ENCODE measurements at regions of chr2 and their contacts with region 1.

Region 1: GRCh38 chr2:144414324-144414845 is 105.5 kb downstream of the ZEB2 start:
- DNase-seq: peak; percentile 10
- H3K4me3 Mint-ChIP-seq: no peak overlapping the region
- H3K27ac Mint-ChIP-seq: no peak overlapping the region
- H3K4me1 Mint-ChIP-seq: peaks cover 17% of the 10 kb centered on the region
- H3K27me3 Mint-ChIP-seq: peaks cover 5% of the 10 kb centered on the region

Region 2: DNA sequence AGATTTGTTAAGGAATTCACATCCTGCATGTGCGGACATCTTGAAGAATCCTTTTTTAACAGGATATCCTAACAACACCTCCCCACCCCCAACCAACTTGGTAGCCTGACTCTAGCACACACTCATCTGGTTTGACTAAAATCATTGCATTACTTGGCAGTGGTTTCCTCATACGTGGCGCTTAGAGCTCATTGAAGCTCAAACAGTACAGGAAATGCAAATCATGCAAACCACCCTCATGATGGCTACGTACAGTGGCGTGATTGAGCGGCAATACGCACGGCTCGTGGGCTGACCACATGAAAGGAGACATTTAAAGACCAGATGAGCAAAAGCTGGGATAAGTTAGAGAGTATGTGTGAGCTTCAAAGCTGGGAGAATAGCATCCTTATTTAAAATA is 230.7 kb before region 1 on chr2:
- CTCF ChIA-PET with region 1: no interaction called
- intact Hi-C with region 1: loop called (anchors 1 kb)
- DNase-seq: peak; percentile 89
- H3K4me3 Mint-ChIP-seq: peak overlapping the region; percentile 52
- H3K27ac Mint-ChIP-seq: peak overlapping the region; percentile 81
- H3K4me1 Mint-ChIP-seq: peaks cover 42% of the 10 kb centered on the region
- H3K27me3 Mint-ChIP-seq: no peaks in the 10 kb centered on the region

Region 3: GRCh38 chr2:144332356-144333142 is 81.8 kb before region 1 on chr2:
- CTCF ChIA-PET with region 1: no interaction called
- intact Hi-C with region 1: loop called (anchors 1 kb)
- DNase-seq: peak; percentile 83
- H3K4me3 Mint-ChIP-seq: peak overlapping the region; percentile 79
- H3K27ac Mint-ChIP-seq: peak overlapping the region; percentile 78
- H3K4me1 Mint-ChIP-seq: peaks cover 19% of the 10 kb centered on the region
- H3K27me3 Mint-ChIP-seq: no peaks in the 10 kb centered on the region

Region 4: GRCh38 chr2:144382849-144383248 is 31.5 kb before region 1 on chr2:
- CTCF ChIA-PET with region 1: no interaction called
- intact Hi-C with region 1: loop called (anchors 2 kb)
- DNase-seq: peak; percentile 29
- H3K4me3 Mint-ChIP-seq: no peak overlapping the region
- H3K27ac Mint-ChIP-seq: no peak overlapping the region
- H3K4me1 Mint-ChIP-seq: peaks cover 26% of the 10 kb centered on the region
- H3K27me3 Mint-ChIP-seq: peaks cover 9% of the 10 kb centered on the region

Region 5: DNA sequence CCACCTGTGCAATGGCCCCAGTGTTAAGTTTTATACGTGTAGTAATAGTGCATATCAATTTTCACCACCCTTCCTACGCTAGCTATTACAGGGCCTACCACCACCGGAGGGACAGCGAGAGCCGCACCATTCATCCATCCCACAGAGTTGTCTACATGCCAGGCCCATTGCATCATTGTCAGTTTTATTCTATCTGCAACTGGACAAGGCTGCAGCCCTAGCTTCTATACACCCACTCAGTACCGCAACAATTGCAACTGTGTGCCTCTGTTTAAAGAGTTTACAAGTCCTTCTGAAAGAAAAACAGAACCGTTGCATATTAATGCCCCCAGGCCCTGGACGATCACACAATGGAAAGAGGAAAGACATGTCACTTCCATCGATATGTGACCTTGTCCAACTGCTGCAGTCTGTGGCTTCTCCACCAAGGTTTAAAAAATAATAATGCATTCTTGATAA is 47.0 kb after region 1 on chr2:
- CTCF ChIA-PET with region 1: no interaction called
- intact Hi-C with region 1: no loop called
- DNase-seq: no peak
- H3K4me3 Mint-ChIP-seq: no peak overlapping the region
- H3K27ac Mint-ChIP-seq: no peak overlapping the region
- H3K4me1 Mint-ChIP-seq: peaks cover 4% of the 10 kb centered on the region
- H3K27me3 Mint-ChIP-seq: peaks cover 3% of the 10 kb centered on the region

Region 6: GRCh38 chr2:144493027-144493809 is 78.8 kb after region 1 on chr2:
- CTCF ChIA-PET with region 1: no interaction called
- intact Hi-C with region 1: loop called (anchors 1 kb)
- DNase-seq: peak; percentile 26
- H3K4me3 Mint-ChIP-seq: no peak overlapping the region
- H3K27ac Mint-ChIP-seq: peak overlapping the region; percentile 31
- H3K4me1 Mint-ChIP-seq: peaks cover 14% of the 10 kb centered on the region
- H3K27me3 Mint-ChIP-seq: peaks cover 3% of the 10 kb centered on the region

Measured in activated naive CD4-positive, alpha-beta T cell treated with anti-CD3 and anti-CD28 coated beads for 36 hours (primary cell).